Posterior cingulate gyrus (tissue), 11 donors: ENCODE measurements at regions of chr7 and their contacts with region 1.

Region 1: GRCh38 chr7:41979834-41980307 is 257.1 kb downstream of the GLI3 start:
- DNase-seq: no peak

Region 2: GRCh38 chr7:41148521-41148951 is 831.3 kb before region 1 on chr7:
- intact Hi-C with region 1: no loop called
- DNase-seq: no peak

Region 3: GRCh38 chr7:42831718-42832431 is 852.0 kb after region 1 on chr7:
- intact Hi-C with region 1: loop called (anchors 2 kb)
- DNase-seq: peak in 8 of 10 donors; percentile 48 to 92 (median 68)